CD4-positive, alpha-beta memory T cell (primary cell): ENCODE measurements at regions of chr3 and their contacts with region 1.

Region 1: DNA sequence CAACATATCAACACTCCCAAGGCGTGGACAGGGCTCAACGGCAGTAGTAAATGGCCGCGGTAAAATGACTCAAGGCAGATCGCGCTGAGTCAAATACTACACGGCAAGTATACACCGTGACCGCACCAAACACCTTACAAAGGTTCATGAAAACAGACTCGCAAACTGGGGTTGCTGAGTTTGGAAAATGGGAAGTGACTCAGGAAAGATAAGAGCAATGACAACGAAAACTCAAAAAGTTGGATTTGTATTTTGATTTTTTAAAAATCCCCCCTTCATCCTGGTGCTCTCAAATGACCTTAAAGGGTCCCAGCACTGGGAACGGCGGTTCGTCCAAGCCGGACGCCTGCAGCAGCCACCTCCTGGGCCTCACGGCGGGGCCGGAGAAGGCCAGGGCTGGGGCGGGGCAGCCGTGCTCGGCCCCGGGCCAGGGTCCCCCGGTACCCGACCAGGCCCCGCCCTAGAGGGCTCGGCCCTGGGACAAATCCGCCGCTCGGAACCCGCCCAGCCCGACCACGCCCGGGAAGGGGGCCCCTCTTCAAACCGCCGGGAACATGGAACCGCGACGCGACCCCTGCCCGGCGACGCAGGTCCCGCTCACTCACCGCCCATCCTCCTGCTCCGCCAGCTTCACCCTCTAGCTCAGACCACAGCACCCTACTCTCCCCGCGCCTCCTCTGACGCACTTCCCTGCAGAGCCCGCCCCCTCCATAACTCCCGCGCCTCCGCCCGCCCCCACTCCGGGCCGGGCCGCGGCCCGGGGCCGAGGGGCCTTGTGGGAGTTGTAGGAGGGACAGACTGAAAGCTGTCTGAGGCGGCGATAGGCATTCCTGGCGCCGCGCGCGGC is at the start of gene CLDND1:
- DNase-seq: peak; percentile 93 to 96 (median 94)
- H3K4me3 ChIP-seq: peak within 1 kb of the TSS; percentile 85 to 88
- H3K4me3 Mint-ChIP-seq: peak within 1 kb of the TSS; percentile 93 to 100 (median 98)
- H3K27ac ChIP-seq: peak within 1 kb of the TSS; percentile 97
- H3K27ac Mint-ChIP-seq: peak within 1 kb of the TSS; percentile 86 to 99 (median 97)
- H3K4me1 ChIP-seq: peaks cover 57% of the 10 kb centered on the region
- H3K4me1 Mint-ChIP-seq: peaks cover 39 to 68% (median 53%) of the 10 kb centered on the region in 4 donors
- H3K27me3 ChIP-seq: no peaks in the 10 kb centered on the region
- H3K27me3 Mint-ChIP-seq: no peaks in the 10 kb centered on the region
- total RNA-seq, gene CLDND1: 421 to 431 TPM

Region 2: DNA sequence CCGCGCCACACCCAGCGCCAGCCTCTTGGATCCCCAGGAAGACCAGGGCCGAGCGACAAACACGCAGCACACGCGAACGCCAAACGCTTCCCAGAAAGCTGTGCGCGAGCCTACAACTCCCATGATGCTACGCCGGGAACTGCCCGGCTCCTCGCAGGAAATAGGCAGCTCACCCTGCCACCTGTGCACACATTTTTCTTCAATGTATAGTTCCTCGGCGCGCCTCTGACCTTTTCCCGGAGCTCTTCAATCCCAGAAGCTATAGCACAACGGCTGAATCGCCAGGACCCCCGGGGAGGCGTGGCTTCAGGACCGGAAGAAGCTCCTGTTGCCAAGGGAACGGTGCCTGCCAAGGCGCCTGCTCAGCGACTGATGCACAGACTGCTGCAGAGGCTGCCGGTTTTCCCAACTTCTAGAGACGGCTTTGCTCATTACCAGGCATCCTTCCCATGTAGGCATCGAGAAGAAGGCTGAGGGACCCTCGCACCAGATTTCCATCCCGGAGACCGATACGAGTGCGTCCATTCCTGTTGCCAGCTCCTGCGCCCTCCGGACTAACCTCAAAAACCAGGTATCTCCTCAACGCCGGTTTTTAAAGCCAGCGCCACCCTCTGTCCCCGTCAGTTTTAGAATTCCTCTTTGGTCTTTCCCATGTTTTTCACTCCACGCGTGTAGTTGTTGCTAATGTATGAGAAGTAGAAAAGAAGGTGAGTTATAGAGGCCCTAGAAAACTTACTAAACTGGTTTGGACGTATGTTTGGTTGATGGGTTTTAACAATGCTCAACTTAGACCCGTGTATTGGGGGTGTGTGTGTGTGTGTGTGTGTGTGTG is 757.8 kb before region 1 on chr3 and contains the start of gene ARL6:
- CTCF ChIA-PET with region 1: no interaction called
- POLR2A ChIA-PET with region 1: no interaction called
- intact Hi-C with region 1: loop called (anchors 1 kb)
- DNase-seq: peak; percentile 71 to 80 (median 75)
- H3K4me3 ChIP-seq: peak within 1 kb of the TSS; percentile 84
- H3K4me3 Mint-ChIP-seq: peak within 1 kb of the TSS; percentile 97 to 99 (median 98)
- H3K27ac ChIP-seq: peak within 1 kb of the TSS; percentile 73
- H3K27ac Mint-ChIP-seq: peak within 1 kb of the TSS; percentile 93 to 98 (median 95)
- H3K4me1 ChIP-seq: peaks cover 24% of the 10 kb centered on the region
- H3K4me1 Mint-ChIP-seq: peaks cover 11 to 32% (median 23%) of the 10 kb centered on the region in 4 donors
- H3K27me3 ChIP-seq: no peaks in the 10 kb centered on the region
- H3K27me3 Mint-ChIP-seq: no peaks in the 10 kb centered on the region
- total RNA-seq, gene ARL6: 3.7 to 6.4 TPM

Region 3: DNA sequence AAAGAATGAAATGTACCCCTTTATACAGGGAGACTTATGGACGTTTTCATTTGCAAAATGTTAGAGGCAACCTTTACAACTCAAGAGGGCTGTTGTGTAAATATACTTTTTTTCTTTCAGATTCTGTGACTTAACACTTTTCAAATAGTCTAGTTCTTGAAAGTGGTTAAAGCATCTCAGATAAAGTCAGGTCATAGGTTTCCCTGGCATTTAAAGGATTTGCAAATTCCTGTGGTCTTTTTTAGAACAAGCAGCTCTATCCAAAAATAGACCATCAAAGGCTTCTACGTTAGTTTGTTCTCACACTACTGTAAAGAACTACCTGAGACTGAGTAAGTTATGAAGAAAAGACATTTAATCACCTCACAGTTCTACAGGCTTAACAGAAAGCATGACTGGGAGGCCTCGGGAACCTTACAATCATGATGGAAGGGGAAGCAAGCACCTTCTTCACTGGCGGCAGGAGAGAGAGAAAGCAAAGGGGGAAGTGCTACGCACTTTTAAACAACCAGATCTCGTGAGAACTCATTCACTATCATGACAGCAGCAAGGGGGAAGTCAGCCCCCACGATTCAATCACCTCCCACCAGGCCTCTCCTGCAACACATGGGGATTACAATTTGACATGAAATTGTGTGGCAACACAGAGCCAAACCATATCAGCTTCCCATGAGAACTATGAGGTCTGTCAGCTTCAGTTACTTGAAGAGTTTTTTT is 464.1 kb before region 1 on chr3:
- CTCF ChIA-PET with region 1: no interaction called
- POLR2A ChIA-PET with region 1: no interaction called
- intact Hi-C with region 1: no loop called
- DNase-seq: no peak
- H3K4me3 ChIP-seq: no peak overlapping the region
- H3K4me3 Mint-ChIP-seq: no peak overlapping the region
- H3K27ac ChIP-seq: no peak overlapping the region
- H3K27ac Mint-ChIP-seq: peak overlapping the region in 1 of 7 donors; percentile 27
- H3K4me1 ChIP-seq: no peaks in the 10 kb centered on the region
- H3K4me1 Mint-ChIP-seq: no peaks in the 10 kb centered on the region
- H3K27me3 ChIP-seq: no peaks in the 10 kb centered on the region
- H3K27me3 Mint-ChIP-seq: peaks cover 7 to 10% of the 10 kb centered on the region in 2 donors

Region 4: GRCh38 chr3:98540346-98540745 is 17.9 kb after region 1 on chr3:
- CTCF ChIA-PET with region 1: interaction called, 6 read pairs
- POLR2A ChIA-PET with region 1: interaction called, 52 read pairs
- intact Hi-C with region 1: no loop called
- DNase-seq: no peak
- H3K4me3 ChIP-seq: no peak overlapping the region
- H3K4me3 Mint-ChIP-seq: peak overlapping the region; percentile 18 to 78 (median 43)
- H3K27ac ChIP-seq: no peak overlapping the region
- H3K27ac Mint-ChIP-seq: peak overlapping the region; percentile 19 to 88 (median 68)
- H3K4me1 ChIP-seq: peaks cover 22% of the 10 kb centered on the region
- H3K4me1 Mint-ChIP-seq: peaks cover 15 to 24% (median 20%) of the 10 kb centered on the region in 4 donors
- H3K27me3 ChIP-seq: no peaks in the 10 kb centered on the region
- H3K27me3 Mint-ChIP-seq: no peaks in the 10 kb centered on the region

Region 5: DNA sequence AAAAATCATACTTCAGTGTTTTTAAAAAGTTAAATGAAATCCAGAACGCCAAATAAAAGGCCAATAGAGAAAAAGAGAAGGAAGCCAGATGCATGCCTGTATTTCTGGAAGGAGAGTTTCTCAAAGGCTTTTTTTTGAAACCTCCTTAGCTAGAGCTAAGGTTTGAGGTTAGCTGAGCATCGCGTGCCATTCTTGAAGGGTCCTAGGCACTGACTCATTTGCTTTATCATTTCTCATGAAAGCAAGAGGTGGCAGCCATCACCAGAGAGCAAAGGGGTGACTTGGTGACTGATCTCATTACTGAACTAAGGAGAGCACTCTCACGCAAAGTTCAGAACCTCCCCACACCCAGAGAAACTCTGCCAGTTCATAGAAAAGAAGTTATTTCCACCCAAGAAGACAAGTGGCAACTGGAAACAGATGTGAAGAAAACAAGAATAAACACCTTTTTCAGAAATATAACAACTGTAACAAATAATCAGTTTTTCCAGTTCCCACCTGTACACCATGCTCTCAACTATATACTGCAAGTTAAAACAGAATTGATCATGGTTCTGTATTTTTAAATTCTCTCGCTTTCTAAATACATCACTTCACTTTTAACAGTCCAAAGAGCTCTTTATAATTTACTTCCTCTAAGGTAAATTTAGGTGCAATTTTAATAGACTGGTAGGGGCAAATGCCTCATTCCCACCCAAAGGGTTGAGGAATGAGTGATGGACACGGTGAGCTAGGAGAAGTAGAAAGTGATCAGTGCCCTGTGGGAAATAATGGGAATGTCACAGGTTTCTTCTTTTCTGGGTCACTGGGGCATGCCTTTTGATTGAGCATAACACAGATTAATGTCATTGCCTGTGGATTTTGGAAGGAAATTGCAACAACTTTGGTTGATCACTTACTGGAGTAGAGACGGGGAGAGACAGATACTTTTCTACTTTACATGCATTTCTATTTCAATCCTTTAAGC is 34.0 kb after region 1 on chr3:
- CTCF ChIA-PET with region 1: interaction called, 46 read pairs
- POLR2A ChIA-PET with region 1: interaction called, 680 read pairs
- intact Hi-C with region 1: loop called (anchors 1 kb)
- DNase-seq: peak; percentile 43 to 90 (median 54)
- H3K4me3 ChIP-seq: peak overlapping the region in 1 of 2 donors; percentile 0
- H3K4me3 Mint-ChIP-seq: peak overlapping the region; percentile 72 to 89 (median 80)
- H3K27ac ChIP-seq: peak overlapping the region; percentile 73
- H3K27ac Mint-ChIP-seq: peak overlapping the region; percentile 94 to 99 (median 97)
- H3K4me1 ChIP-seq: peaks cover 86% of the 10 kb centered on the region
- H3K4me1 Mint-ChIP-seq: peaks cover 56 to 89% (median 76%) of the 10 kb centered on the region in 4 donors
- H3K27me3 ChIP-seq: no peaks in the 10 kb centered on the region
- H3K27me3 Mint-ChIP-seq: no peaks in the 10 kb centered on the region

Region 6: GRCh38 chr3:98573181-98573728 is 50.8 kb after region 1 on chr3:
- CTCF ChIA-PET with region 1: interaction called, 8 read pairs
- POLR2A ChIA-PET with region 1: interaction called, 680 read pairs
- intact Hi-C with region 1: loop called (anchors 1 kb)
- DNase-seq: peak in 4 of 5 donors; percentile 41 to 55 (median 50)
- H3K4me3 ChIP-seq: no peak overlapping the region
- H3K4me3 Mint-ChIP-seq: peak overlapping the region in 7 of 8 donors; percentile 7 to 70 (median 59)
- H3K27ac ChIP-seq: no peak overlapping the region
- H3K27ac Mint-ChIP-seq: peak overlapping the region; percentile 11 to 96 (median 88)
- H3K4me1 ChIP-seq: peaks cover 21% of the 10 kb centered on the region
- H3K4me1 Mint-ChIP-seq: peaks cover 22 to 47% (median 37%) of the 10 kb centered on the region in 4 donors
- H3K27me3 ChIP-seq: no peaks in the 10 kb centered on the region
- H3K27me3 Mint-ChIP-seq: no peaks in the 10 kb centered on the region

Region 7: DNA sequence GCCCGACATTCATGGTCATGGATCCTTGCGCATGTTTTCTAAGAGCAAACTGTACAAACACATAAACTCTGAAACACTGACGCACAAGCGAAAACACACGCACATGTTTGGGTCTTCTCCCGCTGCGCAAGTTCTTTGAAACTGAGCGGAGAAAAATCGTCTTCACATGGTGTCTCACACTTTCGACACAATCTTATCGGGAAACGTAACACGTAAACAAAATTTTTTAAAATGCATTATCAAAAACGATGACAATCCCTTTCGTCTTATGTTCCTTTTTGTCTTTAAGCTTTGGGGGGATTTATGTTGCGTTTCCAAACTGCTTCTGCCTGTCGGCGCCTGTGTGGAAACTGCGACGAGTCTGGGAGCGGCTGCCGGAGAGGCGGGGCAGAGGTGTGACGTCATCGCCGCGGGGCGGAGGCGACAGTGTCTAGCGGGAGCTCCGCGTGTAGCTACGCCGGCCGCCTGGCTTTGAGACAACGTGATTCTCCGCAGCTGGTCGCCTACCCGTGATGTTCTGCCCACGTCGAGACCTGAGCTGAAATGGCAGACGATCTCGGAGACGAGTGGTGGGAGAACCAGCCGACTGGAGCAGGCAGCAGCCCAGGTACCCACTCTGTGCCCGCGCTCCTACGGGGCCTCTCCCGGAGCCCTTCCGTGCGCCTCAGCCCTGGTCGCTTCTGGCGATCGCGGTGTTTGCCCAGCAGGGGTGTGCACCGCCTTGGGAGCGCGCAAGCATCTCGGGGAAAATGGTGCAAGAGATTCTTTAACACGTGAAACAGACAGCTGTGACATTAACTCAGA is 1295.2 kb after region 1 on chr3 and contains the start of gene CMSS1:
- CTCF ChIA-PET with region 1: no interaction called
- POLR2A ChIA-PET with region 1: no interaction called
- intact Hi-C with region 1: loop called (anchors 1 kb)
- DNase-seq: peak; percentile 96 to 98 (median 96)
- H3K4me3 ChIP-seq: peak within 1 kb of the TSS; percentile 59 to 73
- H3K4me3 Mint-ChIP-seq: peak within 1 kb of the TSS; percentile 93 to 98 (median 96)
- H3K27ac ChIP-seq: peak within 1 kb of the TSS; percentile 80
- H3K27ac Mint-ChIP-seq: peak within 1 kb of the TSS; percentile 99 to 100 (median 100)
- H3K4me1 ChIP-seq: peaks cover 20% of the 10 kb centered on the region
- H3K4me1 Mint-ChIP-seq: peaks cover 25 to 40% (median 34%) of the 10 kb centered on the region in 4 donors
- H3K27me3 ChIP-seq: no peaks in the 10 kb centered on the region
- H3K27me3 Mint-ChIP-seq: no peaks in the 10 kb centered on the region
- total RNA-seq, gene CMSS1: 18.3 to 20.5 TPM